Natural killer cell (primary cell): ENCODE measurements at regions of chr16 and their contacts with region 1.

Region 1: GRCh38 chr16:57576429-57576870 is 34.0 kb downstream of the ADGRG5 start:
- DNase-seq: peak; percentile 86 to 92
- ATAC-seq: peak; percentile 58 to 70 (median 69)
- H3K4me3 ChIP-seq: no peak overlapping the region
- H3K4me3 Mint-ChIP-seq: peak overlapping the region; percentile 82
- H3K27ac ChIP-seq: peak overlapping the region; percentile 72
- H3K27ac Mint-ChIP-seq: peak overlapping the region; percentile 94 to 97
- H3K4me1 ChIP-seq: peaks cover 58% of the 10 kb centered on the region
- H3K4me1 Mint-ChIP-seq: peaks cover 50 to 61% of the 10 kb centered on the region in 2 donors
- H3K27me3 ChIP-seq: no peaks in the 10 kb centered on the region
- H3K27me3 Mint-ChIP-seq: no peaks in the 10 kb centered on the region
- CTCF ChIP-seq: peak; percentile 87

Region 2: GRCh38 chr16:57535680-57536305 is 40.7 kb before region 1 on chr16:
- intact Hi-C with region 1: loop called (anchors 5 kb)
- DNase-seq: peak; percentile 92 to 97
- ATAC-seq: peak; percentile 84 to 93 (median 89)
- H3K4me3 ChIP-seq: peak overlapping the region; percentile 45
- H3K4me3 Mint-ChIP-seq: peak overlapping the region; percentile 86
- H3K27ac ChIP-seq: peak overlapping the region; percentile 95
- H3K27ac Mint-ChIP-seq: peak overlapping the region; percentile 99
- H3K4me1 ChIP-seq: peaks cover 87% of the 10 kb centered on the region
- H3K4me1 Mint-ChIP-seq: peaks cover 68 to 82% of the 10 kb centered on the region in 2 donors
- H3K27me3 ChIP-seq: no peaks in the 10 kb centered on the region
- H3K27me3 Mint-ChIP-seq: no peaks in the 10 kb centered on the region
- CTCF ChIP-seq: no peak

Region 3: GRCh38 chr16:57591086-57591869 is 14.8 kb after region 1 on chr16:
- intact Hi-C with region 1: loop called (anchors 1 kb)
- DNase-seq: peak; percentile 69 to 83
- ATAC-seq: peak; percentile 61 to 79 (median 63)
- H3K4me3 ChIP-seq: peak overlapping the region; percentile 19
- H3K4me3 Mint-ChIP-seq: peak overlapping the region; percentile 82
- H3K27ac ChIP-seq: peak overlapping the region; percentile 89
- H3K27ac Mint-ChIP-seq: peak overlapping the region; percentile 94 to 97
- H3K4me1 ChIP-seq: peaks cover 81% of the 10 kb centered on the region
- H3K4me1 Mint-ChIP-seq: peaks cover 80 to 87% of the 10 kb centered on the region in 2 donors
- H3K27me3 ChIP-seq: no peaks in the 10 kb centered on the region
- H3K27me3 Mint-ChIP-seq: no peaks in the 10 kb centered on the region
- CTCF ChIP-seq: peak; percentile 81

Region 4: GRCh38 chr16:57720142-57720575 is 143.7 kb after region 1 on chr16:
- intact Hi-C with region 1: loop called (anchors 1 kb)
- DNase-seq: peak; percentile 61 to 67
- ATAC-seq: peak; percentile 86 to 93 (median 90)
- H3K4me3 ChIP-seq: no peak overlapping the region
- H3K4me3 Mint-ChIP-seq: no peak overlapping the region
- H3K27ac ChIP-seq: no peak overlapping the region
- H3K27ac Mint-ChIP-seq: no peak overlapping the region
- H3K4me1 ChIP-seq: no peaks in the 10 kb centered on the region
- H3K4me1 Mint-ChIP-seq: peaks cover 0 to 14% of the 10 kb centered on the region in 2 donors
- H3K27me3 ChIP-seq: no peaks in the 10 kb centered on the region
- H3K27me3 Mint-ChIP-seq: no peaks in the 10 kb centered on the region
- CTCF ChIP-seq: peak; percentile 51

Region 5: DNA sequence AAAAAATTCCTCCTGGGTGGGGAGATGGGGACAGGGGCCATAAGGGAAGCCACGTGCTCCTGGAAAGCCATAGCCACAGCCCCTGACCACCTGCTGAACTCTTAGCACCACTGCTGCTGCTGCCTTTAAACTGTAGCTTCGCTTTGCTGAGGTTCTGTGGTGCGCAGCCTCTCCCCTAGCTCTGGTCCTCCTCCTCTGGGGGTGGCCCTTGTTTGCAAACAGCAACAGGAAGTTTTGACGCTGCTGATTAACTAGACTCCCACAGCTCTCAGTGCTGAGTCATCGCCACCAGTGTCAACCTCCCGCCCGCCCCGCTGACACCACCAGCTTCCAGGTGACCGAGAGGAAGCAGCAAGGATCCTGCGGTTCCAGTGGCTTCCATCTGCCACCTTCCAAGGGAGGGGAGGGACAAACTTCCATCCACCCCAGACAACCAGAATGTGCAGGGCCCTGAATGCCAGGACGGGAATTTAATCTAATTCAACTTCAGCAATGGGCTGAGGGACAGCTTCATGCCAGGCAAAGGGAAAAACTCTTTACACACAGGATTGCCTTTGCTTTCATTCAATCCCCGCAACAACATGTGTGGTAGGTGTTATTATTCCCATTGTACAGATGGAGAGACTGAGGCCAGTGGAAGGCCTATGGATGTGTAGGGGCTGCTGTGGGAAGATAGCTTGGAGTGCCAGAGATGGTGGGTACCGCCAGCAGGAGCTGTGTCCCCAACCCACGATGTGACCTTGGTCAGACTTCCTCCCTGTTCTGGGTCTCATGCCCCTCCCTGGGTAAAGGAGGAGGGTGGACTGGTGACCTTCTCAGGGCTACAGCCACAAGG is 234.0 kb after region 1 on chr16:
- intact Hi-C with region 1: loop called (anchors 5 kb)
- DNase-seq: peak; percentile 82 to 89
- ATAC-seq: peak; percentile 93 to 99 (median 98)
- H3K4me3 ChIP-seq: no peak overlapping the region
- H3K4me3 Mint-ChIP-seq: peak overlapping the region; percentile 69
- H3K27ac ChIP-seq: peak overlapping the region; percentile 52
- H3K27ac Mint-ChIP-seq: peak overlapping the region; percentile 95 to 96
- H3K4me1 ChIP-seq: peaks cover 46% of the 10 kb centered on the region
- H3K4me1 Mint-ChIP-seq: peaks cover 49 to 50% of the 10 kb centered on the region in 2 donors
- H3K27me3 ChIP-seq: no peaks in the 10 kb centered on the region
- H3K27me3 Mint-ChIP-seq: no peaks in the 10 kb centered on the region
- CTCF ChIP-seq: no peak

Region 6: GRCh38 chr16:57899771-57900661 is 323.6 kb after region 1 on chr16:
- intact Hi-C with region 1: loop called (anchors 10 kb)
- DNase-seq: peak; percentile 70 to 89
- ATAC-seq: peak; percentile 75 to 92 (median 82)
- H3K4me3 ChIP-seq: no peak overlapping the region
- H3K4me3 Mint-ChIP-seq: no peak overlapping the region
- H3K27ac ChIP-seq: no peak overlapping the region
- H3K27ac Mint-ChIP-seq: peak overlapping the region in 1 of 2 donors; percentile 29
- H3K4me1 ChIP-seq: no peaks in the 10 kb centered on the region
- H3K4me1 Mint-ChIP-seq: peaks cover 7 to 8% of the 10 kb centered on the region in 2 donors
- H3K27me3 ChIP-seq: no peaks in the 10 kb centered on the region
- H3K27me3 Mint-ChIP-seq: peaks cover 0 to 6% of the 10 kb centered on the region in 2 donors
- CTCF ChIP-seq: peak; percentile 87

Region 7: GRCh38 chr16:58000706-58001676 is 424.5 kb after region 1 on chr16 and contains the start of gene USB1:
- intact Hi-C with region 1: loop called (anchors 1 kb)
- DNase-seq: peak; percentile 91 to 92
- ATAC-seq: peak; percentile 78 to 92 (median 80)
- H3K4me3 ChIP-seq: peak within 1 kb of the TSS; percentile 84
- H3K4me3 Mint-ChIP-seq: peak within 1 kb of the TSS; percentile 92
- H3K27ac ChIP-seq: peak within 1 kb of the TSS; percentile 86
- H3K27ac Mint-ChIP-seq: peak within 1 kb of the TSS; percentile 86 to 90
- H3K4me1 ChIP-seq: peaks cover 56% of the 10 kb centered on the region
- H3K4me1 Mint-ChIP-seq: peaks cover 55 to 64% of the 10 kb centered on the region in 2 donors
- H3K27me3 ChIP-seq: no peaks in the 10 kb centered on the region
- H3K27me3 Mint-ChIP-seq: no peaks in the 10 kb centered on the region
- CTCF ChIP-seq: peak; percentile 81
- total RNA-seq, gene USB1: 64.7 to 86.0 (median 84.8) TPM